Naive thymus-derived CD4-positive, alpha-beta T cell (primary cell): ENCODE measurements at regions of chr12 and their contacts with region 1.

Region 1: DNA sequence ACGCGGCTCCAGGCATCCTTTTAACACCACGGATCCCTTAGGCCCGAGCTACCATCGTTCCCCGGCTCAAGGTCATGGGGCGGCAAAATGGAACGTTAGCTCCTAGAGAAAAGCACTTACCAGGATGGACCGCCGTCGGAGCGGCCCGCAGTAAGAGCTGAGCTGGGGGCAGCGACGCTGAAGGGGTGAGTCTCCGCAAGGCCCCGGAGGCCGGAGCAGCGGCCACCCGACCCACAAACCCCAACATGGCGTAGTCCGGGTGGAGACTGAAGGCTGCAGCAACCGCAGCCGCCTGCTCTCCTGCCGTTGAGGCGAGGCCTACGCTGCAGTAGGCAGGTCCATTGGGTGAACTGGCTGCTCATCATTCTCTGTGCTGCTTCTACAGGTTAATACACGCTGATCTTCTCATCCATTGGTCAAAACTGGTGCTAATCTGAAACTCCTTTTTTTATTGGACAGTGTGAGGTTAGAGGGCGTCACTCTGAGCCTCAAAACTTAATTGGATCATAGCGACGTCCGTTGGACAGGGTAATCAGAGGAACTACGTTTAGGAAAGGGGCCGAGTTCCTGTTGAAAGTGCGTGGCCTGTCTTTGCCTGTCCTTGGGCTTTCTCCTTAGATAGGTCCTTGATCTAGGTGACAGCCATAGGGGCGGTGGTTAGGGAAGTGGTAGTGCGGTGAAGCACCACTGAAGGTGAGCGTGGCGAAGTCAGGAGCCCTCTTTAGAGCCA is at the start of gene ATP5F1B:
- DNase-seq: peak; percentile 65 to 97 (median 93)
- ATAC-seq: peak; percentile 97
- H3K4me3 ChIP-seq: peak within 1 kb of the TSS; percentile 83
- H3K4me3 Mint-ChIP-seq: peak within 1 kb of the TSS; percentile 82 to 98 (median 94)
- H3K27ac ChIP-seq: peak within 1 kb of the TSS; percentile 93
- H3K27ac Mint-ChIP-seq: peak within 1 kb of the TSS; percentile 97 to 100 (median 99)
- H3K4me1 ChIP-seq: peaks cover 4 to 21% of the 10 kb centered on the region in 2 donors
- H3K4me1 Mint-ChIP-seq: peaks cover 17 to 39% (median 34%) of the 10 kb centered on the region in 7 donors
- H3K27me3 ChIP-seq: no peaks in the 10 kb centered on the region
- H3K27me3 Mint-ChIP-seq: no peaks in the 10 kb centered on the region
- total RNA-seq, gene ATP5F1B: 217 to 476 (median 267) TPM

Region 2: DNA sequence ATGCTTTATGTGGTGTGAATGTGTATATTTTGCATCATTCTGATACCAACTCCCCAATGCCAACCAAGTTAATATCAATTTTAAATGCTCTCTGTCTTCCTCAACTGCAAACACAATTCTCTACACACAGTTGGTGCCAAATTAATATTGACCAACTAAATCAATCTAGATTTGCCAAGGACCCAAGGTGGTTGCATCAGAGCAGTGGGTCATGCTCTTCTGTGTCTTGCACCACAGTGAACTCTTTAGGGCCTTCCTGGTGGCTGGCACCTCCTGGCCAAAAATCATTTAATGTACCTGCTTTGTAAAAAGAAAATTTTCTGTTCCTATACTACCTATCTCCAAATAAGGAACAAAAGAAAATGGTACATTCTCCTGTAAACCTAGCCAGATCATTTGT is 365.0 kb before region 1 on chr12:
- CTCF ChIA-PET with region 1: no interaction called
- POLR2A ChIA-PET with region 1: no interaction called
- intact Hi-C with region 1: no loop called
- DNase-seq: no peak
- ATAC-seq: no peak
- H3K4me3 ChIP-seq: no peak overlapping the region
- H3K4me3 Mint-ChIP-seq: no peak overlapping the region
- H3K27ac ChIP-seq: no peak overlapping the region
- H3K27ac Mint-ChIP-seq: peak overlapping the region in 7 of 9 donors; percentile 1 to 68 (median 27)
- H3K4me1 ChIP-seq: no peaks in the 10 kb centered on the region
- H3K4me1 Mint-ChIP-seq: peaks cover 0 to 3% (median 0%) of the 10 kb centered on the region in 7 donors
- H3K27me3 ChIP-seq: no peaks in the 10 kb centered on the region
- H3K27me3 Mint-ChIP-seq: no peaks in the 10 kb centered on the region

Region 3: GRCh38 chr12:56661979-56662638 is 16.2 kb after region 1 on chr12:
- CTCF ChIA-PET with region 1: no interaction called
- POLR2A ChIA-PET with region 1: interaction called, 11 read pairs
- intact Hi-C with region 1: no loop called
- DNase-seq: peak in 1 of 9 donors; percentile 5
- ATAC-seq: peak; percentile 27
- H3K4me3 ChIP-seq: no peak overlapping the region
- H3K4me3 Mint-ChIP-seq: no peak overlapping the region
- H3K27ac ChIP-seq: no peak overlapping the region
- H3K27ac Mint-ChIP-seq: peak overlapping the region in 1 of 9 donors; percentile 24
- H3K4me1 ChIP-seq: no peaks in the 10 kb centered on the region
- H3K4me1 Mint-ChIP-seq: peaks cover 0 to 15% (median 0%) of the 10 kb centered on the region in 7 donors
- H3K27me3 ChIP-seq: no peaks in the 10 kb centered on the region
- H3K27me3 Mint-ChIP-seq: no peaks in the 10 kb centered on the region

Region 4: DNA sequence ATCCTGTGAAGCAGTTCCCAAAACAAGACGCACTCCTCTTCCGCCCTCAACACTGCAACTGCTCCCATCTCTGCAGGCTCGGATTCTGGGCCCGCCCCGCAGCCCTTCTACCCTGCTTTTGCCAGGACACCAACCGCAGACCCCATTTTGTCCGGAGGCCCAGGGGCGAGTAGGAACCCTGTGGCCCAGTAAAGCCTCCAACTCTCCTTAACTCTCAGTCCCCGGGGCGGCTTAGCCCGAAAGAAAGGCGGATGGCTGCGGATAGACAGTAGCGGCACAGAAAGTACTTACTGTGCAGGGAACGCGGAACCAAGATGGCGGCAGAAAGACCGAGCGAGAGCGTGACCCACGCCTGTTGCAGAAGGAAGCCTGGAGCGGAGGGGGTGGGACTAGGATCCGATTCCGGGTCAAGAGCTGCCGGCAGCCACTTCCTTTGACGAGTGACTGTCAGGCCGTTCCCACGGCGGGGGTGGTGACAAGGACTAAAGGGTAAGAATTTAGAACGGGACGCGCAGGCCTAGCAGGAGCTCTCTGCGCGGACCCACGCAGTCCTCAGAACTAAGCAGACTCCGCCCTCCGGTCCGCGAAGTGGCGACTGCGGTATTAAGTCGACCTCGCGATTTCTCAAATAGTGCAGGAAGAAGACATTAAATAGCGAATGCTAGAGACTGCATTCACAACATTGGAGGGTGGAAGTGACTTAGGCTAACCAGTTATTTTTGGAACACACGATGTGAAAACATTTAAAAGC is 79.3 kb after region 1 on chr12 and contains the start of gene NACA:
- CTCF ChIA-PET with region 1: no interaction called
- POLR2A ChIA-PET with region 1: interaction called, 34 read pairs
- intact Hi-C with region 1: loop called (anchors 1 kb)
- DNase-seq: peak; percentile 85 to 99 (median 96)
- ATAC-seq: peak; percentile 95
- H3K4me3 ChIP-seq: peak within 1 kb of the TSS; percentile 100
- H3K4me3 Mint-ChIP-seq: peak within 1 kb of the TSS; percentile 94 to 100 (median 97)
- H3K27ac ChIP-seq: peak within 1 kb of the TSS; percentile 87
- H3K27ac Mint-ChIP-seq: peak within 1 kb of the TSS; percentile 94 to 100 (median 98)
- H3K4me1 ChIP-seq: peaks cover 40 to 43% of the 10 kb centered on the region in 2 donors
- H3K4me1 Mint-ChIP-seq: peaks cover 39 to 53% (median 49%) of the 10 kb centered on the region in 7 donors
- H3K27me3 ChIP-seq: no peaks in the 10 kb centered on the region
- H3K27me3 Mint-ChIP-seq: no peaks in the 10 kb centered on the region
- total RNA-seq, gene NACA: 834 to 1,486 (median 1,355) TPM

Region 5: GRCh38 chr12:56851462-56851861 is 205.6 kb after region 1 on chr12:
- CTCF ChIA-PET with region 1: no interaction called
- POLR2A ChIA-PET with region 1: no interaction called
- intact Hi-C with region 1: no loop called
- DNase-seq: no peak
- ATAC-seq: no peak
- H3K4me3 ChIP-seq: no peak overlapping the region
- H3K4me3 Mint-ChIP-seq: no peak overlapping the region
- H3K27ac ChIP-seq: no peak overlapping the region
- H3K27ac Mint-ChIP-seq: no peak overlapping the region
- H3K4me1 ChIP-seq: no peaks in the 10 kb centered on the region
- H3K4me1 Mint-ChIP-seq: no peaks in the 10 kb centered on the region
- H3K27me3 ChIP-seq: no peaks in the 10 kb centered on the region
- H3K27me3 Mint-ChIP-seq: peaks cover 5 to 31% (median 20%) of the 10 kb centered on the region in 5 donors